Dorsolateral prefrontal cortex (tissue), 120 donors: ENCODE measurements at regions of chr7 and their contacts with region 1.

Region 1: GRCh38 chr7:25215694-25216335 is 12.5 kb downstream of the NPVF start:
- DNase-seq: no peak
- H3K4me3 ChIP-seq: no peak overlapping the region
- H3K27ac ChIP-seq: no peak overlapping the region
- H3K27me3 ChIP-seq: peaks cover 0 to 9% (median 0%) of the 10 kb centered on the region in 45 donors
- CTCF ChIP-seq: no peak

Region 2: GRCh38 chr7:25158966-25159365 is 56.8 kb before region 1 on chr7:
- intact Hi-C with region 1: no loop called
- DNase-seq: no peak
- H3K4me3 ChIP-seq: no peak overlapping the region
- H3K27ac ChIP-seq: no peak overlapping the region
- H3K27me3 ChIP-seq: no peaks in the 10 kb centered on the region
- CTCF ChIP-seq: no peak

Region 3: GRCh38 chr7:25179771-25180591 is 35.8 kb before region 1 on chr7:
- intact Hi-C with region 1: loop called in 1 of 2 experiments (anchors 2 kb)
- DNase-seq: peak; percentile 73 to 95 (median 86)
- H3K4me3 ChIP-seq: peak overlapping the region; percentile 57 to 91 (median 77)
- H3K27ac ChIP-seq: peak overlapping the region in 52 of 59 donors; percentile 18 to 90 (median 69)
- H3K27me3 ChIP-seq: peaks cover 0 to 6% (median 0%) of the 10 kb centered on the region in 45 donors
- CTCF ChIP-seq: peak; percentile 63 to 94 (median 81)